HepG2 (cell line): ENCODE measurements at regions of chr3 and their contacts with region 1.

Region 1: DNA sequence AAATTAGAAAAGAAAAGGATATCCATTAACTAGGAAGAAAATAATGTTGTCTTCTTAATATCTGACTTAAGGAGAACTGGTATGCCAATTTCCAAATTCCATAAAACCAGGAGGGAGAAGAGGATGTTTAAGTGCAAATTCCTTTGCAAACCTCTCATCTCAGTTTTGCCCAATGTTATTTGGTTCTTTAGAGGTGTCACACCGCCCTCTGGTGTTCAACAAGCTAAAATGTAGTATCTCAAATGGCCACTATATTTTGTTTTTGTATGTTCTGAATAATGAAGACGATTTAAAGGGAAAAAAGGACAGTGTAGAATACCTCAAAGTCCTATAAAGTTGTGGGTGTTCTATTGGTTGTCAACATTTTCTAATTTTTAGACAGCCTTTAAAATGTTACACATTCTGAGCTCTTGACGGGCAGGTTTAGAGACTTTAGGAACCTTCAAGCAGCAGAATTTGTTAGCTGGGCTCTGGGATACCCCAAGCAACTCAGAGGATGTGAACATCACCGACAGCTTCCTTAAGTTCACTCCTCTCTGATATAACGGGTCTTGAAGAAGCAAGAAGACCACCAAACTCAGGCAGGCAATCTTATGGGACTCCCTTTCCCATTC is 458.3 kb downstream of the MFSD1 start:
- DNase-seq: peak; percentile 56
- ATAC-seq: peak; percentile 68
- H3K4me3 ChIP-seq: no peak overlapping the region
- H3K27ac ChIP-seq: no peak overlapping the region
- H3K4me1 ChIP-seq: no peaks in the 10 kb centered on the region
- H3K27me3 ChIP-seq: no peaks in the 10 kb centered on the region
- CTCF ChIP-seq: peak; percentile 74
- EP300 ChIP-seq: no peak
- POLR2A ChIP-seq: no peak
- RAD21 ChIP-seq: peak; percentile 57

Region 2: GRCh38 chr3:157594413-157594812 is 1665.7 kb before region 1 on chr3:
- CTCF ChIA-PET with region 1: no interaction called
- POLR2A ChIA-PET with region 1: no interaction called
- in situ Hi-C with region 1: no loop called
- intact Hi-C with region 1: no loop called
- DNase-seq: no peak
- ATAC-seq: no peak
- H3K4me3 ChIP-seq: no peak overlapping the region
- H3K27ac ChIP-seq: no peak overlapping the region
- H3K4me1 ChIP-seq: no peaks in the 10 kb centered on the region
- H3K27me3 ChIP-seq: peaks cover 0 to 13% of the 10 kb centered on the region in 2 experiments; a peak in 3 of 5 replicates
- CTCF ChIP-seq: no peak
- EP300 ChIP-seq: no peak
- POLR2A ChIP-seq: no peak
- RAD21 ChIP-seq: no peak

Region 3: DNA sequence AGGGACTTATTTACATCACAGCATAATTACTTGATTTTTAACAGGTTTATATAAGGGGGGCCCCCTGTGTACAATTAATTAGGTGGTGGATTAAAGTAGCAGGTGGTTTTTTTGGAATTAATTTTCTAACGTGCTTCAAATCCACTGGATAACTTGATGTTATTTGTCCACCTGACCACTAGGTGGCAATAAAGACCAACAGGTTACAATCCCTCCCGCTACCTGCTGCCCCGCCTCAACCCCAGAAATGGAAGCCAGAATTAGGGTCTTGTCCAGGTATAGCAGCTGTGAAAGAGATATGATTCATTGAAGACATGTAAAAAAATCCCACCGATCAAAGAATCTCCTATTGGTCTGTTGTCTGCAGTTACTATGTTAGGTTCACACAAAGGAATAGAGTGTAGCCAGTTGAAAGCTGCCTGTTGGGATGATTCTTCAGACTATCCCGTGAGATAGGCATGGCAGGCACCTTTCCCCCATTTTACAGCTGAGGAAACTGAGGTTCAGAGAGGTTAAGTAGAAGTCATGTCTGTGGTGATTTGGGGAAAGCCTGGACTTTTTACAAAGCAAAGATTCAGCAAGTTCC is 414.3 kb before region 1 on chr3:
- CTCF ChIA-PET with region 1: interaction called, 33 read pairs
- POLR2A ChIA-PET with region 1: no interaction called
- in situ Hi-C with region 1: loop called (anchors 5 kb)
- intact Hi-C with region 1: loop called (anchors 1 kb)
- DNase-seq: peak; percentile 41
- ATAC-seq: peak; percentile 76
- H3K4me3 ChIP-seq: no peak overlapping the region
- H3K27ac ChIP-seq: no peak overlapping the region
- H3K4me1 ChIP-seq: no peaks in the 10 kb centered on the region
- H3K27me3 ChIP-seq: peaks cover 0 to 10% of the 10 kb centered on the region in 2 experiments; a peak in 2 of 5 replicates
- CTCF ChIP-seq: peak; percentile 77
- EP300 ChIP-seq: no peak
- POLR2A ChIP-seq: no peak
- RAD21 ChIP-seq: peak; percentile 61

Region 4: GRCh38 chr3:158918008-158918407 is 342.1 kb before region 1 on chr3:
- CTCF ChIA-PET with region 1: interaction called, 13 read pairs
- POLR2A ChIA-PET with region 1: no interaction called
- in situ Hi-C with region 1: loop called (anchors 5 kb)
- intact Hi-C with region 1: loop called (anchors 1 kb)
- DNase-seq: peak; percentile 45
- ATAC-seq: peak; percentile 99
- H3K4me3 ChIP-seq: no peak overlapping the region
- H3K27ac ChIP-seq: no peak overlapping the region
- H3K4me1 ChIP-seq: no peaks in the 10 kb centered on the region
- H3K27me3 ChIP-seq: no peaks in the 10 kb centered on the region
- CTCF ChIP-seq: peak; percentile 68
- EP300 ChIP-seq: no peak
- POLR2A ChIP-seq: no peak
- RAD21 ChIP-seq: no peak

Region 5: DNA sequence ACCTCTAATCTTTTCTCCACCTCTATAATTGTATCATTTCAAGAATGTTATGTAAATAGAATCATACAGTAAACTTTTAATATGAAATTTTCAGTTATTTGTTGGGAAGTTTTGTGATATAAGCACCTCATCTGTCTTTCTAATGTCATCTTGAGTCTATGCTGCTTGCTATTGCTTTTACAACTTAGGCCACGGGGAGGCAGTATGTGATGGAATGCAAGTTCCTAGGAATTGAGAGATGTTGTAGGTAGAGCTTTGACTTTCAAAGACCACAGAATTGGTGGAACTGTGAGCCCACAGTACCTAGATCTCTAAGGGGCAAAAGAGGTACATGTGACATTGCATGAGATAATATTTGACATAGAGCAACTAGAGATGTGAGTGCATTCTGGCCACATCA is 130.0 kb before region 1 on chr3:
- CTCF ChIA-PET with region 1: interaction called, 7 read pairs
- POLR2A ChIA-PET with region 1: no interaction called
- in situ Hi-C with region 1: loop called (anchors 10 kb)
- intact Hi-C with region 1: loop called (anchors 1 kb)
- DNase-seq: peak; percentile 13
- ATAC-seq: no peak
- H3K4me3 ChIP-seq: no peak overlapping the region
- H3K27ac ChIP-seq: no peak overlapping the region
- H3K4me1 ChIP-seq: no peaks in the 10 kb centered on the region
- H3K27me3 ChIP-seq: no peaks in the 10 kb centered on the region
- CTCF ChIP-seq: peak; percentile 53
- EP300 ChIP-seq: no peak
- POLR2A ChIP-seq: no peak
- RAD21 ChIP-seq: no peak

Region 6: DNA sequence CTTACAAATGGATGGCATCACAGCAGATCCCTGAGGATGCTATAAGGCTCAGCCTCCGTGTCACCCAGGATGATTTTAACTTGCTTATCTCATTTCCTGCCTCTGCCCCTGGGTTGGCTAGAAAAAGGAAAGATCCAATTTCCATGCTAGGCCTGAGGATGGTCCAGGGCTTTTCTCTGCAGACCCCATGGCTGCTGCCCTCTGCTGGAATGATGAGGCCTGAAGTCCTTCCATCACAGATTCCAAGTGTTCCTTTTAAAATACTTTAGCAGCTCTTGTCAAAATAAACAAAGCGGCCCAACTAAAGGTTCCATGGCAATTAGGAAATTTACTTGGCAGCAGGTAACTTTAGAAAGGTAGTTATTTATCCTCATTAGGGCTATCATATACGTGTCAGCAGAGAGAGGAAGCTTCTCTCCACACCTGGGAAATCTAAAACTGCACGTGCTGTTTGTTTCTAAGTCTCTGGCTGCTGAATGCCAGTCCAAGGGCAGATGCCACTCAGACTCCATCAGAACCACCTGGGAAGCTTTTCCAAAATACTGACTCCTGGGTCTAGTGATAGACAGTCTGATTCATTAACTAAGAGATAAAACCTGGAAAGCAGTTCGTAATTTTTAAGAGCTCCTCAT is 326.5 kb after region 1 on chr3:
- CTCF ChIA-PET with region 1: interaction called, 5 read pairs
- POLR2A ChIA-PET with region 1: no interaction called
- in situ Hi-C with region 1: loop called (anchors 10 kb)
- intact Hi-C with region 1: no loop called
- DNase-seq: peak; percentile 9
- ATAC-seq: peak; percentile 79
- H3K4me3 ChIP-seq: no peak overlapping the region
- H3K27ac ChIP-seq: no peak overlapping the region
- H3K4me1 ChIP-seq: no peaks in the 10 kb centered on the region
- H3K27me3 ChIP-seq: no peaks in the 10 kb centered on the region
- CTCF ChIP-seq: peak; percentile 64
- EP300 ChIP-seq: no peak
- POLR2A ChIP-seq: no peak
- RAD21 ChIP-seq: no peak

Region 7: GRCh38 chr3:159988617-159989271 is 728.6 kb after region 1 on chr3 and contains the start of gene IL12A:
- CTCF ChIA-PET with region 1: no interaction called
- POLR2A ChIA-PET with region 1: no interaction called
- in situ Hi-C with region 1: loop called (anchors 25 kb)
- intact Hi-C with region 1: no loop called
- DNase-seq: peak; percentile 59
- ATAC-seq: peak; percentile 98
- H3K4me3 ChIP-seq: peak within 1 kb of the TSS; percentile 63 to 71 (median 68)
- H3K27ac ChIP-seq: no peak within 1 kb of the TSS
- H3K4me1 ChIP-seq: peaks cover 20% of the 10 kb centered on the region
- H3K27me3 ChIP-seq: no peaks in the 10 kb centered on the region
- CTCF ChIP-seq: peak; percentile 95
- EP300 ChIP-seq: no peak
- POLR2A ChIP-seq: 0 out of 4 replicates have a peak, but pooled peaks of 1 of the 2 experiments have one; percentile 24
- RAD21 ChIP-seq: peak; percentile 69
- total RNA-seq, gene IL12A: 0.74 and 1.1 TPM in 2 replicates

Region 8: DNA sequence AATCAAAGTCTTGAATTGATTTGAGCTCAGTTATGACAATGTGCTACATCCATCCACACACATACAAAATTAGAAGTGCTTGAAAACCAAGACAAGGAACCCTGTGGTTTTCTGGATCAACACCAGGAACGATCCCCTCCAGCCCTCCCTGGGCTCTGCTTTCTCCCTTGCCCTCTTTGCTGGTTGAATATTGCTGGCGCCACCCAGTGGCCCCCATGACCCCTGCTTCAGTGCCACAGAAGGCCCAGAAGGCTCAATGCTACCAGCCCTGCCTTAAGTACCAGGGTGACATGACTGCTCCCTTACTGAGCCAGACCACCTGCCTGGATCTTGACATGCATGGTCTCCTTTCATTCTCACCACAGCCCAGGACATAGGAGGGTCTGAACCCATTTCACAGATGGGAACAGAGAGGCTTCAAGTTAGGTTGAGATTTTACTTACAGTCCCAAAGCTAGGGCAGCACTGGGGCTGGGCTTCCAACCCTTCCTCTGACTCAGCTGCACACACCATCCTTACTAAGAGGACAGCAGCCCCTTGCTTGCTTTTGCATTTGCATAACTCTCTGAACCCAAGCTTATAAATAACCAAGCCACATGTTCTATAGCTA is 743.5 kb after region 1 on chr3:
- CTCF ChIA-PET with region 1: no interaction called
- POLR2A ChIA-PET with region 1: no interaction called
- in situ Hi-C with region 1: loop called (anchors 25 kb)
- intact Hi-C with region 1: loop called (anchors 5 kb)
- DNase-seq: peak; percentile 51
- ATAC-seq: peak; percentile 98
- H3K4me3 ChIP-seq: no peak overlapping the region
- H3K27ac ChIP-seq: no peak overlapping the region
- H3K4me1 ChIP-seq: no peaks in the 10 kb centered on the region
- H3K27me3 ChIP-seq: 0 out of 5 replicates have a peak, but pooled peaks cover 0 to 3% of the 10 kb centered on the region in 2 experiments
- CTCF ChIP-seq: peak; percentile 77
- EP300 ChIP-seq: no peak
- POLR2A ChIP-seq: no peak
- RAD21 ChIP-seq: peak; percentile 74